HEK293T (cell line): ENCODE measurements at regions of chr12 and their contacts with region 1.

Region 1: GRCh38 chr12:7155481-7156034 is 25.4 kb downstream of the CLSTN3 start:
- DNase-seq: no peak

Region 2: GRCh38 chr12:7144414-7145120 is 11.0 kb before region 1 on chr12:
- CTCF ChIA-PET with region 1: interaction called, 12 read pairs
- POLR2A ChIA-PET with region 1: no interaction called
- DNase-seq: peak; percentile 48